Endothelial cell of umbilical vein (primary cell): ENCODE measurements at regions of chr3 and their contacts with region 1.

Region 1: GRCh38 chr3:197168606-197169005 is 129.8 kb downstream of the DLG1 start:
- DNase-seq: peak; percentile 16
- H3K4me3 ChIP-seq: no peak overlapping the region
- H3K27ac ChIP-seq: no peak overlapping the region
- H3K4me1 ChIP-seq: no peaks in the 10 kb centered on the region
- H3K27me3 ChIP-seq: no peaks in the 10 kb centered on the region
- CTCF ChIP-seq: no peak
- POLR2A ChIP-seq: no peak

Region 2: DNA sequence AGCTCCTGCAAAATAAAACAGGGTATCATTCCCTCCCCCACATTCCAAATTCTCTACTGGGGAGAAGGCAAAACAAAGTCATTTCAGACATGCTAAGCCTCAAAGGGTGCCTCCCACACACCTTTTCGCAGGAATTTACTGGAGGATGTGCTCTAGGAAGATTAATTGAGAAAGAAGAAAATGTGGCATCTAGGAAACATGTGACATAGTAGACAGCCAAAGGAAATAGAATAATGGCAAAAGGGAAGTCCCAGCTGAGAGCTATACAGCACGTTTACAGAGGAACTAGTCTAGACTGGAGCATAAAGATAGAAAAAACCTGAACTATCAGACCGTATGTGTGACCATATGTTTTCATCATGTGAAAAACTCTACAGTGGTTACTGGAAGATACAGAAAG is 80.2 kb before region 1 on chr3:
- CTCF ChIA-PET with region 1: no interaction called
- POLR2A ChIA-PET with region 1: no interaction called
- dilution Hi-C with region 1: no loop called
- intact Hi-C with region 1: loop called (anchors 5 kb)
- DNase-seq: peak; percentile 12
- H3K4me3 ChIP-seq: no peak overlapping the region
- H3K27ac ChIP-seq: no peak overlapping the region
- H3K4me1 ChIP-seq: no peaks in the 10 kb centered on the region
- H3K27me3 ChIP-seq: no peaks in the 10 kb centered on the region
- CTCF ChIP-seq: no peak
- POLR2A ChIP-seq: no peak